Activated naive CD4-positive, alpha-beta T cell treated with anti-CD3 and anti-CD28 coated beads for 36 hours (primary cell): ENCODE measurements at regions of chr14 and their contacts with region 1.

Region 1: DNA sequence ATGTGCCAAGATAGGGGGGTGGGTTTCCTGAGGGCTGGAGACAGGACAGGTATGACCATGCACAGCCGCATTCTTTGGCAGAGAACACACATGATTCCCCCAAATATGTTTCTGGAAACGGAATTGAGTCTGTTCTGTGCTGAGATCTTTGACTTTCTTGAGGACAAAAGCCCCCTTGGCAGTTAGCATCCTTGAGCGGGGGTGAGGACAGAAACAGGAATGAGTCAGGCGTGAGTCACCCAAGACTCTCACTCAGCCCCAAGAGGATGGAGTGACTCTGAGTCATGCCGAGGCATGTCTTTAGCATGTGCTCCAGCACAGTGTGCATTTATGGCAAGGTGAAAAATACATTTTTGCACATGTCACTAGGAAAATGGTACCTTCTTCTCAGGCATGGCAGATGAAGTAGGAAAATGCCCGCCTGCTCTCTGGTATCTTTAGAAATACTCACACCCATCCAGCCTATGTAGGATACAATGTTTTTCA is 52.1 kb downstream of the DAD1 start:
- DNase-seq: peak; percentile 95
- H3K4me3 Mint-ChIP-seq: peak overlapping the region; percentile 67
- H3K27ac Mint-ChIP-seq: peak overlapping the region; percentile 98
- H3K4me1 Mint-ChIP-seq: peaks cover 93% of the 10 kb centered on the region
- H3K27me3 Mint-ChIP-seq: no peaks in the 10 kb centered on the region

Region 2: GRCh38 chr14:21868442-21869046 is 668.4 kb before region 1 on chr14:
- CTCF ChIA-PET with region 1: no interaction called
- intact Hi-C with region 1: loop called (anchors 5 kb)
- DNase-seq: peak; percentile 95
- H3K4me3 Mint-ChIP-seq: peak overlapping the region; percentile 71
- H3K27ac Mint-ChIP-seq: peak overlapping the region; percentile 83
- H3K4me1 Mint-ChIP-seq: peaks cover 42% of the 10 kb centered on the region
- H3K27me3 Mint-ChIP-seq: no peaks in the 10 kb centered on the region

Region 3: GRCh38 chr14:22464422-22465142 is 72.3 kb before region 1 on chr14:
- CTCF ChIA-PET with region 1: no interaction called
- intact Hi-C with region 1: no loop called
- DNase-seq: no peak
- H3K4me3 Mint-ChIP-seq: no peak overlapping the region
- H3K27ac Mint-ChIP-seq: no peak overlapping the region
- H3K4me1 Mint-ChIP-seq: no peaks in the 10 kb centered on the region
- H3K27me3 Mint-ChIP-seq: no peaks in the 10 kb centered on the region

Region 4: DNA sequence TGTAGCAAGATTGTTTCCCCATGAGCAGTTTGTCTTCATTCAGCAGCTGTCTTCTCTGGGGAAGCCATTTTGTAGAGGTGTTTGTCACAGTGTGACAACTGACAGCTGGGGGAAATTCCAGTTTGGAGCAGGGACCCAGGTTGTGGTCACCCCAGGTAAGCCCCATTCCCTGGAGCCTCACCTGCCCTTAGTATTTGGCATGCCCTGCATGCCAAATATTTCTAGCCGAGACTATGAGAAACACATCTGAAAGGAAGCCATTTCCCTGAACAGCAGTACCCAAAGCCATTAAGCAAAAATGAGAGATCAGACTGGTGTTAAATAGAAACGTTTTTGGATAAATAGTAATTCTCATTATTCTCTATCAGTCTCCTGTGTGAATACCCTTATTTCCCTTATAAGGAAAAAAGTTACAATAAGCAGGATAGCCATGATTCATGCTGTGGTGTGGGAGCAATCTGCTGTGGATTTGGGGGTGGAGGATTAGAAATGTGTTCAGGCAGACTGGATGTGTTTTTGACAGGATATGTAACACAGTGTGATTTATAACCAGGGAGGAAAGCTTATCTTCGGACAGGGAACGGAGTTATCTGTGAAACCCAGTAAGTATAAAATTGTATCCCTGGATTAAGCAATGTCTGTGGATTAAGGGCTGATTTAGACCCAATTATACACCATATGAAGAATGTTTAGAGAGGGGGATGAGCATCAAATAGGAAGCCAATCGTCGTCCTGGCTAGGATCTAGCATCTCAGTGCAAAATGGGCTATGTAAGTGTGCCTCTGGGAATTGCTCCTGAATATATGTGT is 16.8 kb before region 1 on chr14:
- CTCF ChIA-PET with region 1: interaction called, 5 read pairs
- intact Hi-C with region 1: loop called (anchors 1 kb)
- DNase-seq: no peak
- H3K4me3 Mint-ChIP-seq: peak overlapping the region; percentile 91
- H3K27ac Mint-ChIP-seq: peak overlapping the region; percentile 98
- H3K4me1 Mint-ChIP-seq: peaks cover 86% of the 10 kb centered on the region
- H3K27me3 Mint-ChIP-seq: no peaks in the 10 kb centered on the region

Region 5: GRCh38 chr14:22526218-22526617 is 10.7 kb before region 1 on chr14:
- CTCF ChIA-PET with region 1: interaction called, 29 read pairs
- intact Hi-C with region 1: loop called (anchors 1 kb)
- DNase-seq: no peak
- H3K4me3 Mint-ChIP-seq: peak overlapping the region; percentile 91
- H3K27ac Mint-ChIP-seq: peak overlapping the region; percentile 98
- H3K4me1 Mint-ChIP-seq: peaks cover 80% of the 10 kb centered on the region
- H3K27me3 Mint-ChIP-seq: no peaks in the 10 kb centered on the region

Region 6: GRCh38 chr14:22549981-22550673 is 13.2 kb after region 1 on chr14:
- CTCF ChIA-PET with region 1: interaction called, 67 read pairs
- intact Hi-C with region 1: loop called (anchors 1 kb)
- DNase-seq: peak; percentile 89
- H3K4me3 Mint-ChIP-seq: peak overlapping the region; percentile 67
- H3K27ac Mint-ChIP-seq: peak overlapping the region; percentile 98
- H3K4me1 Mint-ChIP-seq: peaks cover 92% of the 10 kb centered on the region
- H3K27me3 Mint-ChIP-seq: no peaks in the 10 kb centered on the region